Activated CD4-positive, alpha-beta memory T cell treated with anti-CD3 and anti-CD28 coated beads, Interleukin-2, amount 10 ng/mL, durations not matched to agents 7 days and 5 days (primary cell): ENCODE measurements at regions of chr5 and their contacts with region 1.

Region 1: GRCh38 chr5:139417214-139417613 is 13.3 kb upstream of the SPATA24 start:
- DNase-seq: no peak
- H3K4me3 Mint-ChIP-seq: no peak overlapping the region
- H3K27ac Mint-ChIP-seq: peak overlapping the region; percentile 93
- H3K4me1 Mint-ChIP-seq: peaks cover 83% of the 10 kb centered on the region
- H3K27me3 Mint-ChIP-seq: no peaks in the 10 kb centered on the region

Region 2: DNA sequence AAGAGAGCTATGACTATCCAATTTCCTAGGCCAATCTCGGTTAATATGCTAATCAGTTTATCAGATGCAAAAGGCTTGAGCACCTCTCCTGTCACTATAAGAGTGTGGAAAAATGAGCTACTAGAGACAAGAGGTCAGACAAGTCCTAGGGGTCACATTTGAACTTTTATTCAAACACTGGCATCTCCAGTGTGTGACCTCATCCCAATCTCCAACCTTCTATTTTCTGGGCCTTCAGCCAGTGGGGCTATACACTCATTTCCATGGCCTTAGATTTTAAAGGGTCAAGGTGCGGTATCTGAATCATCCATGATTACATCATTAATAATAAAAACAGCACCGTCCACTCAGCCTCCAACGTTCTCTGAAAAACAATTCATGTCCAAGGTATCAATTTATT is 402.5 kb before region 1 on chr5:
- CTCF ChIA-PET with region 1: no interaction called
- POLR2A ChIA-PET with region 1: no interaction called
- DNase-seq: no peak
- H3K4me3 Mint-ChIP-seq: no peak overlapping the region
- H3K27ac Mint-ChIP-seq: no peak overlapping the region
- H3K4me1 Mint-ChIP-seq: no peaks in the 10 kb centered on the region
- H3K27me3 Mint-ChIP-seq: no peaks in the 10 kb centered on the region

Region 3: GRCh38 chr5:139392678-139393496 is 24.3 kb before region 1 on chr5:
- CTCF ChIA-PET with region 1: interaction called, 5 read pairs
- POLR2A ChIA-PET with region 1: interaction called, 70 read pairs
- DNase-seq: peak; percentile 92
- H3K4me3 Mint-ChIP-seq: peak overlapping the region; percentile 99
- H3K27ac Mint-ChIP-seq: peak overlapping the region; percentile 90
- H3K4me1 Mint-ChIP-seq: peaks cover 65% of the 10 kb centered on the region
- H3K27me3 Mint-ChIP-seq: no peaks in the 10 kb centered on the region